ENCODE measurements at regions of chr15 and their contacts with region 1.

Region 1: DNA sequence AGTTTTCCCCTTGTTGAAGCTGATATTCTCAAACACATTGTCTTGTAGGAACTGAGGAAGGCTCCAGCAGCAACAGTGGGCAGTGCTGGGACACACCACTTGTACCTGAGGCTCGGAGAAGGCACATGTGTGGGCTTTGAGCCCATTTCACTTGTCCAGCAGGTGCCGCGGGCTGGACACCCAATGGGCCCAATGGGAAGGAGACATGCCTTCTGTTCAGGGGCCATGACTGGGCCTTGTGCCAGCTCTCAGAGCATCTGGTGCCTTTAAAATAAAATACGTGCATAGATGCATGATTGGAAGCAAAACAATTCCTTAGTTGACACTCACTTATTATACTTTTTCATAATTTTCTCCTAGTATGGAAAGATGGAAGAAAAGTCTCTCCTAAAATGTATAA is 334.2 kb downstream of the KLF13 start:
- DNase-seq: no peak
- ATAC-seq: no peak
- H3K4me3 ChIP-seq: no peak overlapping the region
- H3K27ac ChIP-seq: no peak overlapping the region
- H3K4me1 ChIP-seq: no peaks in the 10 kb centered on the region
- H3K27me3 ChIP-seq: no peaks in the 10 kb centered on the region
- CTCF ChIP-seq: no peak
- POLR2A ChIP-seq: no peak

Region 2: DNA sequence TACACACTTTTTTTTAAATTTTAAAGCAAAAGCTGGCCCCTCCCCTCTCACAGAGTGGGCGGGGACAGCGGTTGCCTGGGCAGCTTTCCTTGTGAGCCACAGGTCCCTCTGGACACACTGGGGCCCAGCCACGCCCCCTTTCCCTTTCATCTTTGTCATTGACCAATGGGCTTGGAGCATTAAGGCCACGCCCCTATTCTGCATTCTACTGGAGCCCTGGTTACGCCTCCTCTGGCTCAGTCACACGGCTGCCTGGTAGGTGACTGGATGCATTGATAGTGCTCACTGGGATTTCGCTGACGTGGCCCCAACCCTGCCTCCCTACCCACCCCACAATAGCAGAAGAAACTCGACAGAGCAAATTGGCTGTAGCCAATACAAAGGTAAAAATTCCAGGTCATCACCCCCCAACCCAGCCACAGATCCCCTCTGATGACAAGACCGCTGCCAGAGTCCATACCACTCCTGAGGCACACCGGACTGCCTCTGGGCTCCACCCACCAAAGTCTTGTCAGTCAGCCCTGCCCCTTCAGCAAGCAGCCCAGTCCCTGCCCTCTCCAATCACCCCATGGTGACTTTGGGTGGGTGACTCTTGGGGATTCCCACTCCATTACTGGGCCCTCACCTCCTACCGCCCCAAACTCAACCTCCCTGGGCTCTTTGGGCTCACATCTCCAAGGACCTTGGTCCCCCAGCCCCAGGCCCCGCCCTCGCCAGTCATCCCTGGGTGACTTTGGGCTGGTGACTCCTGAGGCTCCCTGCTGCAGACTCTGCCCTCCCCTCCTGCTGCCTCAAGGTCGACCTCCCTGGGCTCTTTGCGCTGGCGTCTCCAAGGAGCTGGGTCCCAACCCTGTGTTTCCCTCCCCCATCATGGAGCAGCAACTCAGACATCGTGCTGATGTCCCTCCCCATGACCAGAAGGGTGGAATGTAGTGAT is 869.3 kb before region 1 on chr15:
- in situ Hi-C with region 1: no loop called
- intact Hi-C with region 1: no loop called
- DNase-seq: no peak
- ATAC-seq: no peak
- H3K4me3 ChIP-seq: no peak overlapping the region
- H3K27ac ChIP-seq: no peak overlapping the region
- H3K4me1 ChIP-seq: no peaks in the 10 kb centered on the region
- H3K27me3 ChIP-seq: no peaks in the 10 kb centered on the region
- CTCF ChIP-seq: no peak
- POLR2A ChIP-seq: no peak

Region 3: DNA sequence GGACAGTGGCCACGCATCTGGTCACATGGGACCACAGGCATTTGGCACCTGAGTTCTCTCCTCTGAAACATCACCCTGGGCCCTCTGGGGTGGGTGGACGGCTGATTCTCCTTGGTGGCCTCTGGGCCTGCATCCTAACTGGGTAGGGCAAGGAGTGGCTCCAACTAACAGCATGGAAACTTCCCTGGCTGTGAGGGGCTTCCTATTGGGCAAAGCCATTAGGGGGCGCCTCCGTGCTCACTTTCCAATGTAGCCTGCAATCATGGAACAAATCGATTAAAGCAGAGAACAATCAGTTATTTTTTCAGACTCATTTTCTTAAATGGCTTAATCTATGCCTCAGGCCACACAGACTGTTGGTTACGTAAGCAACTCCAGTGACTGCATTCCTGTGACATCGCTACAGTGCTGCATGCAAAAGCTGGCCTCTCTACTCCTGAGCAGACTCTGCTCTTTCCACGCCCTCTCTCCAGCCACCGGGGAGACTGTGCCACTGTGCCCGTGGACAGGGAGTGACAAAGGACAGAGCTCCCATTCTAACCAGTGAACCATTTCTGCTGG is 55.4 kb before region 1 on chr15:
- in situ Hi-C with region 1: no loop called
- intact Hi-C with region 1: no loop called
- DNase-seq: no peak
- ATAC-seq: no peak
- H3K4me3 ChIP-seq: no peak overlapping the region
- H3K27ac ChIP-seq: no peak overlapping the region
- H3K4me1 ChIP-seq: no peaks in the 10 kb centered on the region
- H3K27me3 ChIP-seq: no peaks in the 10 kb centered on the region
- CTCF ChIP-seq: no peak
- POLR2A ChIP-seq: no peak

Region 4: DNA sequence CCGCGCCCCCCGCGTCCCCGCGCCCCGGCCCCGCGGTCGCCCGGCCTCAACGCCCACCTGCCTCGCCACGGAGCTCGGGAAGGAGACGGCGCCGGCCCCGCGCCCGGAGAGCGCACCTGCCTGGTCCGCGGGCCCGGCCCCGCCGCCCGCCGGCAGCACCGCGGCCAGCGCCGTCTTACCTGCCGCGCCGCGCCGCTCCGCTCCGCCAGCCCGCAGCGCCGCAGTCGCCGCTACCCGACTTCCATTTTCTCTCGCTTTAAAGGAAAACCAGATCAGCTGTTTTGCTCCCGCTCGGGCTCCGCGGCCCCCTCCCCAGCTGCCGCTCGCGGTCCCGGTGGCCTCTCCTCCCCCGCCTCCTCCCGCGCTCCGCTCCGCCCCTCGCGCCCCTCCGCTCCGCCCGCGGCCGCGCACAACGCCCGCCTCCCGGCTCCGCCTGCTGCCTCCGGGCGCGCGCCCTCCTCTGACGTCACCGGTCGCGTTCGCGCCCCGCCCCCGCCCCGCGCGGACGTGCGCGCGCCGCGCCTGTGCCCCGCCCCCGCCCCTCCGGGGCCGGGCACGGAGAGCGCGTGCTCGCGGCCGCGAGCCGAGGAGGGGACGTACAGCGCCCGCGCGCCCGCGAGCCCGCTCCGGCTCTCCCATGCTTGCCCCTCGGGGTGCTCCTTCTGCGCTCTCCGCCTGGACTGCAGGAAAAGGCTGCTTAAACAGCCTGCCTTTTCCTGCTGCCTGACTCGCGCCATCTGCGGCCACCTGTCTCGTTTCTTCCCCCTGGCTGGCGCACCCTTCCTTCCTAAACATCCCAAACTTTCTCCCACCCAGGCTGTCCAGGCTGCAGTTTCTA is 209.7 kb after region 1 on chr15:
- in situ Hi-C with region 1: loop called in 1 of 4 experiments (anchors 10 kb)
- intact Hi-C with region 1: loop called (anchors 10 kb)
- DNase-seq: peak; percentile 74 to 75
- ATAC-seq: peak; percentile 88 to 90
- H3K4me3 ChIP-seq: peak within 1 kb of the TSS; percentile 64 to 85 (median 70)
- H3K27ac ChIP-seq: peak within 1 kb of the TSS; percentile 69 to 87 (median 84)
- H3K4me1 ChIP-seq: peaks cover 6% of the 10 kb centered on the region in 2 donors
- H3K27me3 ChIP-seq: no peaks in the 10 kb centered on the region
- CTCF ChIP-seq: peak in 1 of 5 experiments; percentile 9
- POLR2A ChIP-seq: peak; percentile 42 to 49

Region 5: DNA sequence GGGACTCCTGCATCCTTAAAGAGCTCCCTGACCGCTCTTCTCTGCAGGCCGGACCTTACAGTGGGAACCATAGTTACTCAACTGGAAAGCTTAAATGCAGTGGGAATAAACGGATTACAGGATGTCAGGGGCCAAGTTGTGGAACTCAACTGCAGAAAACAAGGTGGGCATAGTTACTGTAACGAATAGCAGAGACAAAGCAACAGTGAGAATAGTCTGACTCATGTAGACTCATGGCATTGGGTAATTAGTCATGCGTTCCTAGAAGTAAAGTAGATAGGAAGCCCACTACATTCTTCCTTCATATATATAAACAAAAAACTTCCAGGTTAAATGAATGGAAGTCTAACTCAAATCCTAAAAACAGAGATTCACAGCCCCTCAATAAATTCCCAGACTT is 274.0 kb after region 1 on chr15:
- in situ Hi-C with region 1: no loop called
- intact Hi-C with region 1: no loop called
- DNase-seq: no peak
- ATAC-seq: no peak
- H3K4me3 ChIP-seq: no peak overlapping the region
- H3K27ac ChIP-seq: no peak overlapping the region
- H3K4me1 ChIP-seq: no peaks in the 10 kb centered on the region
- H3K27me3 ChIP-seq: no peaks in the 10 kb centered on the region
- CTCF ChIP-seq: no peak
- POLR2A ChIP-seq: no peak